Activated B cell treated with CpG ODN at 0.5 μM for 24 hours (primary cell): ENCODE measurements at regions of chr5 and their contacts with region 1.

Region 1: DNA sequence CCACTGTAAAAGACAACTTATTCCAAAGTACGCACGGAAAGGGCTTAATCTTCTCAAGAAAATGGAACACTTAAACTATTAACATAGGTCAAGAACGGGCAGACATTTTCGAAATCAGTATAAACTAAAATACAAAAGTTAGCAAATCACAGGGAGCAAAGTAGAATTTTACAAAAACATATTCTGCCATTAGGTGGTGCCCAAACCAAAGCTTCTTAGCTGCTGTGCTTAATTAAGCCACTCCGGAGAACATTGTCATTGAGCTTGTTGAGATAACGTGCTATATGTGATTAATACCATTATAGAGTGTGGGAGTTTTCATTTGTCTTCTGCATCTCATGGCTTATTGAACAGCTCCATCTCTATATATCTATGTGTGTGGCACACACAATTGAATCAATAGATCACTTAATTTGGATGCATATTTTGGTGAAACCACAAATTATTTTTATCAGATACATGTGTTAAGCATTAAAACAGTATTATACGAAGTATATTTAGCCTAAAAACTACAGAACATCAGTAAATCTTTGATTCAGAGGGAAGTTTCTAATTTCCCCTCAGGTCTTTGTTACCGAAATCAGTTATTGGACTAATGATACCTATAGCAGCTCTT is 23.4 kb downstream of the UBLCP1 start:
- DNase-seq: no peak
- ATAC-seq: peak; percentile 71
- H3K4me3 Mint-ChIP-seq: no peak overlapping the region
- H3K27ac Mint-ChIP-seq: no peak overlapping the region
- H3K4me1 Mint-ChIP-seq: no peaks in the 10 kb centered on the region
- H3K27me3 Mint-ChIP-seq: no peaks in the 10 kb centered on the region
- CTCF ChIP-seq: no peak

Region 2: DNA sequence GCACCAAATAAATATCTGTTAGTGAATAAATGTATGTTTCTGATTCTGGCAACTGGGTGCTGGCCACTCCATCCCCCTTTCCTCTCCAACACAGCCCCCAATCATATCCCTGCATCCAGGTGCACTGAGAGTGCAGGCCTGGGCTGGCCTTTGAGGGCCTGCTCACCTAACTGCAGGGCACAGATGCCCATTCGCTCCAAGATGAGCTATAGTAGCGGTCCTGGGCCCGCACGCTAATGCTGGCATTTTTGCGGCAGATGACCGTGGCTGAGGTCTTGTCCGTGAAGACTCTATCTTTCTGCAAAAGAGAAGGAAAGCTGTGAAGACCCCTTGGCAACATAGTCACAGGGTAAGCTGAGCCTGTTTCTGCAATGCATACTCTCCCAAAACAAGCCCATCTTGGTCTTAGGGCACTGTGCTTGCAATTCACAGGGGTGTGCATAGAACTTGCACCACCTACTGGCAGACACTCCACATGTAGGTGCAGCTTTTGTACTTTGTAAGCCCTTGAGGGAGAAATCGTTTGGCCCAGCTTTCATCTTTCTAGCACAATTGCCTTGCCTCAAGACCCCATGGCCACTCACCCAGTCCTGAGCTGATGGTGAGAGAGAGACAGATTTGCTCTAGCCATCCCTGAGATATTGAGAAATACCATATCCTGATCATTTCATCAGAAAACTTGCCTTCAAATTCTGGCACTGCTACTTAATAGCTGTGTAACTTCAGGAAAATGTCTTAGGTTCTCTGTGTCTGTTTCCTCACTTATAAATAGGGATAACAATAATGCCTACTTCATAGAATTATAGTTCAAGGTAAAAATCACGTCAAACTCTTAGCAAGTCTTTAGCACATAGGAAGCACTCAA is 30.2 kb after region 1 on chr5:
- CTCF ChIA-PET with region 1: interaction called, 68 read pairs
- POLR2A ChIA-PET with region 1: interaction called, 3 read pairs
- intact Hi-C with region 1: loop called (anchors 1 kb)
- DNase-seq: no peak
- ATAC-seq: peak; percentile 67
- H3K4me3 Mint-ChIP-seq: no peak overlapping the region
- H3K27ac Mint-ChIP-seq: no peak overlapping the region
- H3K4me1 Mint-ChIP-seq: no peaks in the 10 kb centered on the region
- H3K27me3 Mint-ChIP-seq: peaks cover 6% of the 10 kb centered on the region
- CTCF ChIP-seq: no peak

Region 3: GRCh38 chr5:159515909-159516415 is 229.4 kb after region 1 on chr5:
- CTCF ChIA-PET with region 1: no interaction called
- POLR2A ChIA-PET with region 1: interaction called, 12 read pairs
- intact Hi-C with region 1: no loop called
- DNase-seq: peak; percentile 58
- ATAC-seq: peak; percentile 99
- H3K4me3 Mint-ChIP-seq: no peak overlapping the region
- H3K27ac Mint-ChIP-seq: no peak overlapping the region
- H3K4me1 Mint-ChIP-seq: peaks cover 7% of the 10 kb centered on the region
- H3K27me3 Mint-ChIP-seq: no peaks in the 10 kb centered on the region
- CTCF ChIP-seq: peak; percentile 19

Region 4: GRCh38 chr5:159915904-159916840 is 629.6 kb after region 1 on chr5 and contains the start of gene ADRA1B:
- CTCF ChIA-PET with region 1: interaction called, 26 read pairs
- POLR2A ChIA-PET with region 1: no interaction called
- intact Hi-C with region 1: loop called (anchors 1 kb)
- DNase-seq: peak; percentile 55
- ATAC-seq: peak; percentile 96
- H3K4me3 Mint-ChIP-seq: peak within 1 kb of the TSS; percentile 57
- H3K27ac Mint-ChIP-seq: no peak within 1 kb of the TSS
- H3K4me1 Mint-ChIP-seq: peaks cover 14% of the 10 kb centered on the region
- H3K27me3 Mint-ChIP-seq: peaks cover 29% of the 10 kb centered on the region
- CTCF ChIP-seq: no peak
- total RNA-seq, gene ADRA1B: 0.49 and 0.53 TPM in 2 replicates

Region 5: GRCh38 chr5:159987031-159987674 is 700.6 kb after region 1 on chr5:
- CTCF ChIA-PET with region 1: interaction called, 57 read pairs
- POLR2A ChIA-PET with region 1: interaction called, 5 read pairs
- intact Hi-C with region 1: loop called (anchors 1 kb)
- DNase-seq: peak; percentile 72
- ATAC-seq: peak; percentile 99
- H3K4me3 Mint-ChIP-seq: peak overlapping the region; percentile 70
- H3K27ac Mint-ChIP-seq: no peak overlapping the region
- H3K4me1 Mint-ChIP-seq: peaks cover 7% of the 10 kb centered on the region
- H3K27me3 Mint-ChIP-seq: peaks cover 14% of the 10 kb centered on the region
- CTCF ChIP-seq: no peak

Region 6: DNA sequence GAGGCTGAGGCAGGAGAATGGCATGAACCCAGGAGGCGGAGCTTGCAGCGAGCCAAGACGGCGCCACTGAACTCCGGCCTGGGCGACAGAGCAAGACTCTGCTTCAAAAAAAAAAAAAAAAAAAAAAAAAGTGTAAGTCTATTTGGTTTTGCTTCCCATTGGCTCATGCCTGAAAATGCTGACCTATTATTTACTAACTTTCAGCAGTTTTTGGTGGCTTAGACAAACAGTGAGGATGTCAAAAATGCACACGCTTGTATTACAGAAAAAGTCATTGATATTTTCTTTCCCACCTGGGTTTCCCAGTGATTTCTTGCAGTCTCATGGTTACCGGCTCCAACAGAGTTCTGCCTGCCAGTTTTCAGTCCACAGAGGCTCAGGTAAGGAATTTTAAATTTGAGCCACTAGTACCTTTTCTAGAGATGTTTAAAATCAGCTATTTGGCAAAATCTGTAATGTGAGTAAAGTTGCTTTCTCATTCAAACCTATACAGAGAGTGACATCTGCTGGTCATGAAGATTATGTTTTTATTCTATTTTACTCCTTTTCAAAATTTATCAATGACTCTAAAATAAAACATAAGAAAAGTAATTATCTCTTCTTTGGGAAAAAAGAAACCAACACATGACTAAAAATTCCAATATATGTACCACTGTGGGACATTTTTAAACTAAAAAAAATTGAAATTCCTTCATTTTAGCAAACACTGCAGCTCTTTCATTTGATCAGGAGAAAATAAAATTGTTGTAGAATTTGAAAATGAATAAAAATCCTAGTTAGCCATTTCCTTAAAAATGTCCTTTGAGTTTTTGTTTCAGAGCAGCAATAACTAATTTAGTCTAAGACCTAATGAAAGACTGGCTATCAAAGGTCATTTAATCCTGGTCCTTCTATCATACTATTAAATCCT is 1104.5 kb after region 1 on chr5:
- CTCF ChIA-PET with region 1: no interaction called
- POLR2A ChIA-PET with region 1: no interaction called
- intact Hi-C with region 1: loop called (anchors 5 kb)
- DNase-seq: no peak
- ATAC-seq: no peak
- H3K4me3 Mint-ChIP-seq: no peak overlapping the region
- H3K27ac Mint-ChIP-seq: no peak overlapping the region
- H3K4me1 Mint-ChIP-seq: no peaks in the 10 kb centered on the region
- H3K27me3 Mint-ChIP-seq: no peaks in the 10 kb centered on the region
- CTCF ChIP-seq: no peak